Activated CD4-positive, alpha-beta memory T cell treated with anti-CD3 and anti-CD28 coated beads, Interleukin-2, amount 10 ng/mL, durations not matched to agents 7 days and 5 days (primary cell): ENCODE measurements at regions of chr12 and their contacts with region 1.

Region 1: DNA sequence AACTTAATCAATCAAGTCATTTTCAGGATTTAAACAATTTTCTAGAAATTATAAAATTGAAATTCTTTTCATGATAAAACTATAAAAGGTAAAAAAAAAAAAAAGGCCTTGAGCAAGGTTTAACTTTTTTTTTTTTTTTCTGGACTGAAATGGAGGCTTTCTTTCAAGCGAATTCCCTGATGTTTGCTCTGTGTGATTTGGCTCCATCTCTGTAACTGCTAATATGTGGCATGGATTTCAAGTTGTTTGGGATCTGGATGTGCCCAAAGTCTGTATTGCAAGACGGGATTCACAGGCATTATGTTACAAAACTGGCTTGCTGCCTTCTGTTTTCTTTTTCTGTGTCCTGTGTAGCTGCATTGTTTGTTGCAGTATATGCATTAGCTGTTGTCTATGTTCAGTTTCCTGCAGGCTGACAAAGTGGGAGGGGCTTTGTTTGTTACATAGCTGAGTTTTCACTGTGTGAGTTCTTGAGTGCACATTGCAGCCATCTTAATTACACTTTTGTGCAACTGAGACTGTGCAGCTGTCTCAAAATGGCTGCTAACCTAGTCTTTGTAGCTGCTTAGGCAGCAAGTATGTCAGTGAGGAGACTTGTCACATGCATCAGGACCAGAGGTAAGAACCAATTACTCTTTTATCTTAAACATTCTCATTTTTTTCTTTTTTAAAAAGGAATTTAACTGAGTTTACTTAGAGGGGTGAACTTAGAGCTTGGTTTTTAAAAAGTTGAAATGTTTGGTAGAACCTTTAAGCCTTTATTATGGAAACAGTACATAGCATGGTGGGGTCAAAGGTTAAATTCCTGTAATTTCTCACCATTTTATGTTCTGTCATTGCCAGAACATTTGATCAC is 19.5 kb downstream of the ATF7IP start:
- DNase-seq: peak; percentile 81
- H3K4me3 Mint-ChIP-seq: peak overlapping the region; percentile 74
- H3K27ac Mint-ChIP-seq: peak overlapping the region; percentile 95
- H3K4me1 Mint-ChIP-seq: peaks cover 53% of the 10 kb centered on the region
- H3K27me3 Mint-ChIP-seq: no peaks in the 10 kb centered on the region

Region 2: DNA sequence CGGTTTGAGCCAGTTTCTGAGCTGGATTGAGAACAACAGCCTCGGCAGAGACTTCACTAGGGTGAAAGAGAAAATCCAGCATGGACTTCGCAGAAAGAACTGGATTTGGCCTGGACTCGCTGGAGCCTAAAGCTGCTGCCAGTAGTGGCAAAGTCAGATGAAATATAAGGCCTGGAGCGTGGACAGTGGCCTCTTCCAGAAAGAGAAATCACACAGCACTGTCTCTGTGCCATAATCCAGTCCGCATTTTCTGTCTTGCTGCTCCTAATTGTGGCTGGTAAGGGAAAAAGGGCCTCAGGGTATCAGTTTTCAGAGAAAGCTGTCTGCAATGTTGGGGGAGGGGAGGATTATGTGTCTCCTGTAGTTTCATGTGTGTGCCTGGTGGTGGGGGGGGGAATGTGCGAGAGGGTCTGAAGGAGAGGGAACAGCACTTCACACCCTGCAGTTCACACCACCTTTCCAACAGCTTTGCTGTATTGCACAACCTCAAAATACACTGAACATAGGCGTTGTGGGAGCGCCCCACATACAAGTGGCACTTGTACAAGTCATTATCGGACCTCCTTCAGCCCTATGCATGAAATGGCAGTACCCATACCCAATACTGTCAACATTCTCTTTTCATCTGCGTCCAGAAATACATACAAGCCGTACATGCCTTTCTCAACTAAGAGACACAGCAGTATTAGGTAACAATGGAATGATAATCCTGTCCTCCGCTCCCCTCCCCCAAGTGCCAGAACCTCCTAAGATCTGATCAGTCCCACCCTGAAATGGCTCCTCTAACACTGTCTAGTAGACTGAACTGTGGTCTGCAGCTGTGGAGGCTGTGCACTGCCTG is 127.1 kb before region 1 on chr12:
- CTCF ChIA-PET with region 1: interaction called, 7 read pairs
- POLR2A ChIA-PET with region 1: interaction called, 47 read pairs
- DNase-seq: peak; percentile 95
- H3K4me3 Mint-ChIP-seq: peak overlapping the region; percentile 55
- H3K27ac Mint-ChIP-seq: peak overlapping the region; percentile 100
- H3K4me1 Mint-ChIP-seq: peaks cover 51% of the 10 kb centered on the region
- H3K27me3 Mint-ChIP-seq: no peaks in the 10 kb centered on the region

Region 3: DNA sequence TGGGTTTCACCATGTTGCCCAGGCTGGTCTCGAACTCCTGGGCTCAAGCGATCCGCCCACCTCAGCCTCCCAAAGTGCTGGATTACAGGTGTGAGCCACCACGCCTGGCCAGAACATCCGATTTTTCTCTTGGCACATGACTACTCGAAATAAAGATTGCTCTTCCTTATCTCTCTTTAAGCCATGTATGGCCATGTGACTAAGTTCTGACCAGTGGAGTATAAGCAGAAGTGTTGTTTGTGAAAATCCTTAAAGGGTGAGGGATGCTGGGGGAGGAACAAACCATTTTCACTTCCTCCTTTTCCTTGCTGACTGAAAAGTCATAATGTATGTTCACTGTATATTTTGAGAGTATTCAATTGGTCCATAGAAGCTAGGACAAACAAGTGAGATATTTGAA is 70.2 kb before region 1 on chr12:
- CTCF ChIA-PET with region 1: no interaction called
- POLR2A ChIA-PET with region 1: no interaction called
- DNase-seq: no peak
- H3K4me3 Mint-ChIP-seq: no peak overlapping the region
- H3K27ac Mint-ChIP-seq: no peak overlapping the region
- H3K4me1 Mint-ChIP-seq: no peaks in the 10 kb centered on the region
- H3K27me3 Mint-ChIP-seq: no peaks in the 10 kb centered on the region

Region 4: DNA sequence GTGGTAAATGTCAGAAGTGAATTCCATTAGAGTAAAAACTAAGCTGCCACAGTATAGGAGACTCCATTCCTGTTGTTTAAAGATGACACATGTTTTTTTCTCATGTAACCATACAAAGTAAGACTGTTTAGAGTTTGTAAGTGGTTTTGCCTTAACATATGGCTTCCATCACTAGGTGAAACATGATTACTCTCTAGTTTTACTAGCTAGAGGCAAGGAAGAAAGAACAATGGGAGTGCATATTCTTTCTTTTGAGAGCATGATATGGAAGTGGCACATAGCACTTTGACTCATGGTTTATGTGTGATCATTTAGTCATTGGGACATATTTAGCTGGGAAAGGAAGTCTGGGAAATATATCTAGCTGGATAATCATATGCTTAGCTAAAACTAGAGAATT is 11.8 kb before region 1 on chr12:
- CTCF ChIA-PET with region 1: interaction called, 4 read pairs
- POLR2A ChIA-PET with region 1: interaction called, 107 read pairs
- DNase-seq: no peak
- H3K4me3 Mint-ChIP-seq: no peak overlapping the region
- H3K27ac Mint-ChIP-seq: no peak overlapping the region
- H3K4me1 Mint-ChIP-seq: peaks cover 50% of the 10 kb centered on the region
- H3K27me3 Mint-ChIP-seq: no peaks in the 10 kb centered on the region

Region 5: GRCh38 chr12:14403711-14404196 is 18.7 kb after region 1 on chr12:
- CTCF ChIA-PET with region 1: interaction called, 7 read pairs
- POLR2A ChIA-PET with region 1: interaction called, 37 read pairs
- DNase-seq: no peak
- H3K4me3 Mint-ChIP-seq: no peak overlapping the region
- H3K27ac Mint-ChIP-seq: peak overlapping the region; percentile 38
- H3K4me1 Mint-ChIP-seq: peaks cover 73% of the 10 kb centered on the region
- H3K27me3 Mint-ChIP-seq: no peaks in the 10 kb centered on the region

Region 6: GRCh38 chr12:14410841-14411569 is 26.0 kb after region 1 on chr12:
- CTCF ChIA-PET with region 1: interaction called, 3 read pairs
- POLR2A ChIA-PET with region 1: interaction called, 13 read pairs
- DNase-seq: peak; percentile 56
- H3K4me3 Mint-ChIP-seq: no peak overlapping the region
- H3K27ac Mint-ChIP-seq: peak overlapping the region; percentile 2
- H3K4me1 Mint-ChIP-seq: peaks cover 61% of the 10 kb centered on the region
- H3K27me3 Mint-ChIP-seq: no peaks in the 10 kb centered on the region

Region 7: GRCh38 chr12:14417715-14418114 is 32.7 kb after region 1 on chr12:
- CTCF ChIA-PET with region 1: interaction called, 3 read pairs
- POLR2A ChIA-PET with region 1: interaction called, 32 read pairs
- DNase-seq: peak; percentile 81
- H3K4me3 Mint-ChIP-seq: peak overlapping the region; percentile 73
- H3K27ac Mint-ChIP-seq: peak overlapping the region; percentile 90
- H3K4me1 Mint-ChIP-seq: peaks cover 58% of the 10 kb centered on the region
- H3K27me3 Mint-ChIP-seq: no peaks in the 10 kb centered on the region

Region 8: DNA sequence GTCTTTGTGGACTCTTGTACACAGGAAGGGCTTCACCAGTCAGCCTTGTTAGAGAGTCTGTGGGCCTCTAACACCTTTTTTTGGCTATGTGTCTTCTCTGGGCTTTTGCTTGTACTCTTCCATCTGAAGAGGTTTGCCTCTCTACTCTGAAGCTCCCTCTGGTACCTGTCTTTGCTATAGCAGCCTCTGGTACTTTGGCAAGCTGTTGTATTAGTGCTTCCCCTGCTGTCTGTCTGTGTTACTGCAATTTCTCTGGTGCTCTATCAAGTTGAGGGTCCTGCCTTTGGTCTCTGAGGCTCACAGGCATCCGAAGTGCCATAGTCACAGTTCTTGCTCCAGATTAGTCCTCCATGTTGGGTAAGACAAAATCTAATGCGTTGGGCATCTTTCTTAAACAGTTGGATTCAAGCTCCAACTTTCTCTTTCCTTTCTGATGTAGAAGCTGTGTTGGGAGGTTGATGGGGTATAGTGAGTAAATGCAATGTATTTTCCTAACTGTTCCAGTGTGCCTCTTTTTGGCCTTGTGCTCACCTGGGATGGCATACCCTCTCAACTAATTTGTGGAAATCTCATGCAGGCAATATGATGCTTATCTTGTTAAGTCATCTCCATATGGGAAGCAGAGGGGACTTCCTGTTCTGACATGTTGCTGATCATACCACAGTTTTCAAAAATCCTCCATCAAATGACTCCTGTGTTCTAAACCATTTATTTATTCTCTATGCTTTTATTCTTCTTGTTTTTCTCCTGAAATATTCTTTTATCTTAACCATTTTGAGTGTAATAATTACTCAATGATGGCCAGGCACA is 69.3 kb after region 1 on chr12:
- CTCF ChIA-PET with region 1: interaction called, 7 read pairs
- POLR2A ChIA-PET with region 1: interaction called, 12 read pairs
- DNase-seq: peak; percentile 44
- H3K4me3 Mint-ChIP-seq: peak overlapping the region; percentile 27
- H3K27ac Mint-ChIP-seq: peak overlapping the region; percentile 67
- H3K4me1 Mint-ChIP-seq: peaks cover 41% of the 10 kb centered on the region
- H3K27me3 Mint-ChIP-seq: no peaks in the 10 kb centered on the region